ENCODE measurements at regions of chr3 and their contacts with region 1.

Region 1: DNA sequence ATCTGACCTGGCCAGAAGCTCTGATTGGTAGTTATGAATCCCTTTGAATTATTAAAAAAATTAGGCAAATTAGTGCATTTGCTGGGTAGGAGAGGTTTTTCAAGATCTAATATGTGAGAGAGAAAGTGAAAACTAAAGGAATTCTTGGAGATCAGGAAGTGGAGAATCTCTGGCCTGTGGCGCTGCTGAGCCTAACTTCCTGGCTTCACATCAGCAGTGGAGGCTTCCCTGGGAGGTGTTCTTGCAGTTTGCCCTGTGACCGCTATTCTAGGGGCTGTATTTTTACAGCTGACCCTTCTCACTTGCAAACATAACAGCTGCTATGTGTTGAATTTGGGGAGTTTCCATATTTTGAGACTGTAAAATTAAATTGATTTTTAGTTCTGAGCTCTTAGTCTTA is 166.4 kb downstream of the ATG7 start:
- DNase-seq: no peak
- H3K4me3 ChIP-seq: no peak overlapping the region
- H3K27ac ChIP-seq: no peak overlapping the region
- H3K4me1 ChIP-seq: no peaks in the 10 kb centered on the region
- H3K27me3 ChIP-seq: no peaks in the 10 kb centered on the region
- CTCF ChIP-seq: no peak

Region 2: GRCh38 chr3:11799791-11800190 is 361.1 kb after region 1 on chr3:
- CTCF ChIA-PET with region 1: no interaction called
- POLR2A ChIA-PET with region 1: no interaction called
- intact Hi-C with region 1: no loop called
- DNase-seq: no peak
- H3K4me3 ChIP-seq: no peak overlapping the region
- H3K27ac ChIP-seq: no peak overlapping the region
- H3K4me1 ChIP-seq: peaks cover 10% of the 10 kb centered on the region; the same call in 1 of the 2 replicates
- H3K27me3 ChIP-seq: no peaks in the 10 kb centered on the region
- CTCF ChIP-seq: no peak

Region 3: GRCh38 chr3:11826628-11827265 is 388.1 kb after region 1 on chr3:
- CTCF ChIA-PET with region 1: interaction called, 3 read pairs
- POLR2A ChIA-PET with region 1: interaction called, 10 read pairs
- intact Hi-C with region 1: no loop called
- DNase-seq: no peak
- H3K4me3 ChIP-seq: no peak overlapping the region
- H3K27ac ChIP-seq: no peak overlapping the region
- H3K4me1 ChIP-seq: no peaks in the 10 kb centered on the region
- H3K27me3 ChIP-seq: no peaks in the 10 kb centered on the region
- CTCF ChIP-seq: no peak

Region 4: GRCh38 chr3:12822725-12823373 is 1384.2 kb after region 1 on chr3:
- CTCF ChIA-PET with region 1: no interaction called
- POLR2A ChIA-PET with region 1: no interaction called
- intact Hi-C with region 1: no loop called
- DNase-seq: no peak
- H3K4me3 ChIP-seq: no peak overlapping the region
- H3K27ac ChIP-seq: no peak overlapping the region
- H3K4me1 ChIP-seq: no peaks in the 10 kb centered on the region
- H3K27me3 ChIP-seq: no peaks in the 10 kb centered on the region
- CTCF ChIP-seq: peak; percentile 75